Tibial artery (tissue), 4 donors: ENCODE measurements at regions of chr2 and their contacts with region 1.

Region 1: GRCh38 chr2:226800941-226801784 is 1.5 kb upstream of the IRS1 start:
- DNase-seq: peak; percentile 59 to 92
- H3K4me3 ChIP-seq: peak overlapping the region; percentile 85 to 92
- H3K27ac ChIP-seq: peak overlapping the region; percentile 88 to 97
- H3K4me1 ChIP-seq: peaks cover 0 to 47% (median 31%) of the 10 kb centered on the region in 4 donors
- H3K27me3 ChIP-seq: no peaks in the 10 kb centered on the region
- CTCF ChIP-seq: no peak

Region 2: GRCh38 chr2:225889446-225889850 is 911.7 kb before region 1 on chr2:
- intact Hi-C with region 1: loop called (anchors 5 kb)
- DNase-seq: no peak
- H3K4me3 ChIP-seq: no peak overlapping the region
- H3K27ac ChIP-seq: no peak overlapping the region
- H3K4me1 ChIP-seq: no peaks in the 10 kb centered on the region
- H3K27me3 ChIP-seq: no peaks in the 10 kb centered on the region
- CTCF ChIP-seq: peak; percentile 77 to 85

Region 3: GRCh38 chr2:226378753-226379580 is 422.2 kb before region 1 on chr2:
- intact Hi-C with region 1: no loop called
- DNase-seq: no peak
- H3K4me3 ChIP-seq: no peak overlapping the region
- H3K27ac ChIP-seq: no peak overlapping the region
- H3K4me1 ChIP-seq: peaks cover 0 to 23% (median 5%) of the 10 kb centered on the region in 4 donors
- H3K27me3 ChIP-seq: no peaks in the 10 kb centered on the region
- CTCF ChIP-seq: no peak